T-cell (primary cell): ENCODE measurements at regions of chr5 and their contacts with region 1.

Region 1: DNA sequence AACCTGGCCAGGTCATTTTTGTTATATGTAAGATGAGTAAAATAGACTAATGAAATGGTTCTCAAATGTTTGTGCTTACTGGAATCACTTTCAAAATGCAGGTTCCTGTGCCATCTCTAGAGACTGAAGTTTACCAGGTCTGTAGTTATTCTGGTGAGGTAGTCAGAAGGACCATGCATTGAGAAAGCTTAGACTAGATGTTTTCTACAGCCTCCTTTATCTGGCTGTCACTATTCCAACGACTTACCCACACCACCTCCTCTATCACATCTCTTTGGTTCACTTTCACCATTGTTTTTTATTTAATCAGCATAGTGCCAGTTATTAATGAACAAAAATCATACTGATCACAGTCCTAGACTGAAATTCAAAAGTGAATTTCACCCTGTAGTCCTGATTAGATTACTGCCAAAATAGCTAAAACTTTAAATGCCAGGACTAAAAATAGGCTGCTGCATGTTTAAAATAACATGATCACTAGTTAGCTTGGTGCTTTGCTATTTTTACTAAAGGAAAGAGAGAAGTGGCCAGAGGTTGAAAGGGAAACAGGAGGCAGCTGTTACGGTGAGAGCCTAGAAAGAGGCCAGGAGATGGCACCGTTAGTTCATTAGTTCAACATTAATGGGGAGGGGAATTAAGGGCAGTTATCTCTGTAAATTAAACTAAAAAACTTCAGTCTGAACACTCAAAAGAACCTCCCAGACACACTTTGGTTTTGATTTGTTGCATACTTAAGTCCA is 13.9 kb upstream of the FNIP1 start:
- DNase-seq: peak in 1 of 35 experiments; percentile 44
- ATAC-seq: peak in 1 of 4 experiments; percentile 56
- H3K4me3 ChIP-seq: no peak overlapping the region
- H3K4me3 Mint-ChIP-seq: no peak overlapping the region
- H3K27ac ChIP-seq: no peak overlapping the region
- H3K27ac Mint-ChIP-seq: no peak overlapping the region
- H3K4me1 ChIP-seq: no peaks in the 10 kb centered on the region
- H3K4me1 Mint-ChIP-seq: no peaks in the 10 kb centered on the region
- H3K27me3 ChIP-seq: no peaks in the 10 kb centered on the region
- H3K27me3 Mint-ChIP-seq: no peaks in the 10 kb centered on the region

Region 2: GRCh38 chr5:130727830-130728229 is 1082.8 kb before region 1 on chr5:
- CTCF ChIA-PET with region 1: no interaction called
- POLR2A ChIA-PET with region 1: no interaction called
- DNase-seq: no peak
- ATAC-seq: no peak
- H3K4me3 ChIP-seq: no peak overlapping the region
- H3K4me3 Mint-ChIP-seq: no peak overlapping the region
- H3K27ac ChIP-seq: no peak overlapping the region
- H3K27ac Mint-ChIP-seq: no peak overlapping the region
- H3K4me1 ChIP-seq: no peaks in the 10 kb centered on the region
- H3K4me1 Mint-ChIP-seq: no peaks in the 10 kb centered on the region
- H3K27me3 ChIP-seq: no peaks in the 10 kb centered on the region
- H3K27me3 Mint-ChIP-seq: peaks cover 6 to 7% of the 10 kb centered on the region in 2 donors

Region 3: DNA sequence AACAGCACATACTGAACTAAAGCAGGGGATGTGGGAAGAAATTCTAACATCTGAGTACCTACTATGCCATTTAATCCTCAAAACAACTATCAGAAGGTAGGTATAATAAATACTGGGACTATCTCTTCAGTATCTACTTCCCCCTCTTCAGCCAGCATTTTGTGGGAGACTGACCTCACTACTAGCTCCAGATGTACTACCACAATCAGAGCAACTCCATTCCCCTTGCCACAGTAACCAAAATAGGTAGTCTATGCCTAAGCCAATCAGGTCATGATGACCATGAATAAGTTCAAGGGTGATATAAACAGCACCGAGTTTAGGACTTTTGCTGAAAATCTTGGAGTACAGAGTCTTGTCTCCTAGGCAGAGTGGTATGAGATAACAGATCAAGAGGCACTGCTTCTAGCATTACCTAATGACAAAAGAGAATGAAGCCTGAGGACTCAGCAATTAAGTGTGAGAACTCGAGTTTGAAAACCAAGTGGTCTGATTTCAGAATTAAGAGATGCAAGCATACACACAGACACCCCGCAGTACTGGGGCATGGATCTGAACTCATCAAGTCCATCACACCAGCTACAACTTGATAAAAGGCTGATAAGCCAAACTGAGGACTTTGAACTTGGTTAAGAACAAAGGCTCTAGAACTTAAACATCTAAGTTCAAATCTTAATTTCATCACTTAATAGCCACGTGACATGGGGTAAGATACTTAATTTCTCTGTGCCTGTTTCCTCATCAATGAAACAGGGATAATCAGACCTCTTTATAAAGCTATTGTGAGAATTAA is 23.6 kb before region 1 on chr5:
- CTCF ChIA-PET with region 1: interaction called in 1 of 2 experiments, 10 read pairs
- POLR2A ChIA-PET with region 1: no interaction called
- DNase-seq: no peak
- ATAC-seq: no peak
- H3K4me3 ChIP-seq: no peak overlapping the region
- H3K4me3 Mint-ChIP-seq: no peak overlapping the region
- H3K27ac ChIP-seq: no peak overlapping the region
- H3K27ac Mint-ChIP-seq: no peak overlapping the region
- H3K4me1 ChIP-seq: peaks cover 0 to 3% of the 10 kb centered on the region in 2 experiments
- H3K4me1 Mint-ChIP-seq: peaks cover 60 to 62% (median 62%) of the 10 kb centered on the region in 3 donors
- H3K27me3 ChIP-seq: no peaks in the 10 kb centered on the region
- H3K27me3 Mint-ChIP-seq: no peaks in the 10 kb centered on the region

Region 4: DNA sequence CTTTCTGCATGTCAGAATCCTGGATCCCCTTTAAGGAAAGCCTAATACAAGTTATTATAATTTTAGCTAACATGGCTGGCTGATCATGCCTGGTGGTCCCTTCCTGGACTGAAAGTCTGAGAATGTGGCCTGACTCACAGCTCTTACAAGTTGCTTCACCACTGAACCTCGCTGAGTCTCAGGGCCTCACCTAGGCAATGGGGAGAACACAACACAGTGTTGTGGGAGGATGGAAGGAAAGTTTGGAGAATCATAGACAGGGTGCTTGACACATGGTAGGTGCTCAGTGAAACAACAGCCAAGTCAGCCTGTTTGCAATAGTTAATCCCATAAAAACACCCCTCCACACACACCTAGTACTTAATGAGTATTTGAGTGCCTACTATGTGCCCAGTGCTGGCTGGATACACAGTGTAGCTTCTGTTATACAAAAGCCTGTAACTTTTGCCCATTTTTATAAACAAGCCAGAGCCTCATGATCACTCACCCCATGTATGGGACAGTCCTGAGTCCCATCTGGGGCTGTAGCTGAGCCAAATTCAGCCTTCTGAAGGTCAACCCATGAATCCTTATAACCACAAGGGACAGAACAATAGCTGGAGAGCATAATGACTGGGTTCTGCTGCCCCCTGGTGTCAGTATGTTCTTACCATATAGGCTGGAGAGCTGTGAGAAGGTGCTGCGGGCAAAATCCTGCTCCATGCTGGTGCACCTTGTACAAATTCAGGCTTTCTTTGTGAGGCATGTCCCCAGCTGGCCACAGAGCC is 196.9 kb after region 1 on chr5:
- CTCF ChIA-PET with region 1: interaction called, 3 to 17 read pairs
- POLR2A ChIA-PET with region 1: no interaction called
- DNase-seq: peak; percentile 30 to 87 (median 65)
- ATAC-seq: peak; percentile 46 to 73 (median 55)
- H3K4me3 ChIP-seq: no peak overlapping the region
- H3K4me3 Mint-ChIP-seq: no peak overlapping the region
- H3K27ac ChIP-seq: no peak overlapping the region
- H3K27ac Mint-ChIP-seq: no peak overlapping the region
- H3K4me1 ChIP-seq: peaks cover 0 to 33% of the 10 kb centered on the region in 2 experiments
- H3K4me1 Mint-ChIP-seq: peaks cover 33 to 46% (median 33%) of the 10 kb centered on the region in 3 donors
- H3K27me3 ChIP-seq: peaks cover 0 to 39% of the 10 kb centered on the region in 2 experiments
- H3K27me3 Mint-ChIP-seq: peaks cover 8 to 18% of the 10 kb centered on the region in 2 donors

Region 5: DNA sequence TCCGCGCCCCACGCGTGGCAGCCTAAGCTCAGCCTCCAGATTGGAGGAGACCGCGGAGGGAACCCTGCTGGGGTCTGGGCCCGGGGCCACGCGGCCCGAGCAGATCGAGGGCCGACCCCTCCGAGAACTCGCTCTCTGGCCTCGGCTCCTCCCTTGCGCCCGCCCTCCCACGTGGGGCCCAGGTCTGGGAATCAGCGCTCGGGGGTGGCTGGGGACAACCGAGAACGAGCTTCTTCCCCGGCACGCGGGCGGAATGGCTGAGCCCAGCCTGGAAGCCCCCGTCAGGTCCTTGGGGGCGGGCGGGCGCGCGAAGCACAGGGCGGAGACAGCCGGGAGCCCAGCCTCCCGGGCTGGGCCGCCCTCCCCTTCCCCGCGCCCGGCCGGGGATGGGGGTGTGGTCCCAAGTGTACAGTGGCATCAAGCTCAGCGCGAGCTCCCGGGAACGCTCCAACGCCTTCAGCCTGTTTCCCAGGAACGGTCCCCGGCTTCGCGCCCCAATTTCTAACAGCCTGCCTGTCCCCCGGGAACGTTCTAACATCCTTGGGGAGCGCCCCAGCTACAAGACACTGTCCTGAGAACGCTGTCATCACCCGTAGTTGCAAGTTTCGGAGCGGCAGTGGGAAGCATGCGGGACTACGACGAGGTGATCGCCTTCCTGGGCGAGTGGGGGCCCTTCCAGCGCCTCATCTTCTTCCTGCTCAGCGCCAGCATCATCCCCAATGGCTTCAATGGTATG is 483.5 kb after region 1 on chr5 and contains the start of gene SLC22A4:
- CTCF ChIA-PET with region 1: no interaction called
- POLR2A ChIA-PET with region 1: no interaction called
- DNase-seq: peak; percentile 19 to 75 (median 54)
- ATAC-seq: peak; percentile 80 to 87 (median 83)
- H3K4me3 ChIP-seq: peak within 1 kb of the TSS; percentile 68 to 80
- H3K4me3 Mint-ChIP-seq: peak within 1 kb of the TSS; percentile 81 to 91 (median 89)
- H3K27ac ChIP-seq: peak within 1 kb of the TSS; percentile 27
- H3K27ac Mint-ChIP-seq: peak within 1 kb of the TSS; percentile 36
- H3K4me1 ChIP-seq: peaks cover 7 to 25% of the 10 kb centered on the region in 2 experiments
- H3K4me1 Mint-ChIP-seq: peaks cover 13 to 21% (median 19%) of the 10 kb centered on the region in 3 donors
- H3K27me3 ChIP-seq: peaks cover 0 to 38% of the 10 kb centered on the region in 2 experiments
- H3K27me3 Mint-ChIP-seq: peaks cover 16 to 17% of the 10 kb centered on the region in 2 donors
- total RNA-seq, gene SLC22A4: 0.20 TPM in 1 of 5 donors, not detected in the others